ENCODE measurements at regions of chr20 and their contacts with region 1.

Region 1: DNA sequence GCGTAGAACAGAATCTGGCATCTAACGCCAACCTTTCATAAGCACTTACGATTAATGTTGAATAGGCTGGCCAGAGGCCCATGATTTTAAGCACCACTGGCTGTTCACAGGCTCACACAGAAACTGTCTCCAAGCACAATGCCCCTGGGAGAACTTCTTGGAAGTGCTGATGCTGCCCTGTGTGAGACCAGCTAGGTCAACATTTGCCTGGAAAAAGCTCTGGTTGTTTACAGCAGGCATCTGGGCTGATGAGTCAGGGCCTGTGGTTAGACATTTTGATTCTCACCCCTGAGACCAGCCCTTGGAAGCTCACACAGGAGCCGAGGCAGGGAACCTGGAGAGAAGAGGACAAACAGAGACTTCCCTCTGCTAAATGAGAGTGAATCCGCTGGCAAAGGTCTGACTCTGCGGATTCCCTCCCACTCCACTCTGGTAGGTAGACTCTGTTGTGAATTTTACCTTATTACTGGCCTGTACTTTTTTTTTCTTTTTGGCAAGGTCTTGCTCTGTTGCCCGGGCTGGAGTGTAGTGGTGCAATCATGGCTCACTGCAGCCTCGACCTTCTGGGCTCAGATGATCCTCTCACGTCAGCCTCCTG is 6.8 kb upstream of the SULF2 start:
- DNase-seq: peak; percentile 91
- H3K4me3 ChIP-seq: no peak overlapping the region
- H3K27ac ChIP-seq: peak overlapping the region; percentile 58 to 82 (median 71)
- H3K4me1 ChIP-seq: peaks cover 0 to 54% (median 37%) of the 10 kb centered on the region in 4 donors
- H3K27me3 ChIP-seq: no peaks in the 10 kb centered on the region
- CTCF ChIP-seq: no peak
- EP300 ChIP-seq: peak in 1 of 4 donors; percentile 33
- POLR2A ChIP-seq: no peak

Region 2: GRCh38 chr20:47725248-47725973 is 66.7 kb before region 1 on chr20:
- intact Hi-C with region 1: no loop called
- DNase-seq: peak; percentile 80
- H3K4me3 ChIP-seq: no peak overlapping the region
- H3K27ac ChIP-seq: no peak overlapping the region
- H3K4me1 ChIP-seq: peaks cover 0 to 18% (median 14%) of the 10 kb centered on the region in 4 donors
- H3K27me3 ChIP-seq: no peaks in the 10 kb centered on the region
- CTCF ChIP-seq: peak; percentile 31 to 86 (median 81)
- EP300 ChIP-seq: no peak
- POLR2A ChIP-seq: no peak

Region 3: DNA sequence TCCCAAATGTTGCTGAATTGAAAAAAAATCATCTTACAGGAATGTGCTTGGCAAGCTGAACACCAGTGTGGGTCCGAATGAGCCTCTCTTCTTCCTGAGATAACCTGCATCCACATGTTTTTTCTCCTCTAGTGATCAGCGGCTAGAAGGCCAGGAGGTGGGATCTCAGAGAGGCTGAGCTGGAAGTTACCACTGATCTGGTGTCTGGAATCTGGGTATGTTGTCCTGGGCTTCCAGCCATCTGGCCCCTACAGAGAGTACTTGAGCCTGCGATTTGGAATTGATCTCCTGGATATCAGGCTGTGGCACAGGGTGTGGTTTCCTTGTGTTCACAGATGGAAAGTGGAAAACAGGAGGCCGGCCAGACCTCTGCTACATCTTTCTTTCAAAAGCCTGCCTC is 42.8 kb before region 1 on chr20:
- intact Hi-C with region 1: no loop called
- DNase-seq: no peak
- H3K4me3 ChIP-seq: no peak overlapping the region
- H3K27ac ChIP-seq: peak overlapping the region in 2 of 4 donors; percentile 9 to 32
- H3K4me1 ChIP-seq: peaks cover 0 to 20% (median 10%) of the 10 kb centered on the region in 4 donors
- H3K27me3 ChIP-seq: no peaks in the 10 kb centered on the region
- CTCF ChIP-seq: no peak
- EP300 ChIP-seq: no peak
- POLR2A ChIP-seq: no peak

Region 4: DNA sequence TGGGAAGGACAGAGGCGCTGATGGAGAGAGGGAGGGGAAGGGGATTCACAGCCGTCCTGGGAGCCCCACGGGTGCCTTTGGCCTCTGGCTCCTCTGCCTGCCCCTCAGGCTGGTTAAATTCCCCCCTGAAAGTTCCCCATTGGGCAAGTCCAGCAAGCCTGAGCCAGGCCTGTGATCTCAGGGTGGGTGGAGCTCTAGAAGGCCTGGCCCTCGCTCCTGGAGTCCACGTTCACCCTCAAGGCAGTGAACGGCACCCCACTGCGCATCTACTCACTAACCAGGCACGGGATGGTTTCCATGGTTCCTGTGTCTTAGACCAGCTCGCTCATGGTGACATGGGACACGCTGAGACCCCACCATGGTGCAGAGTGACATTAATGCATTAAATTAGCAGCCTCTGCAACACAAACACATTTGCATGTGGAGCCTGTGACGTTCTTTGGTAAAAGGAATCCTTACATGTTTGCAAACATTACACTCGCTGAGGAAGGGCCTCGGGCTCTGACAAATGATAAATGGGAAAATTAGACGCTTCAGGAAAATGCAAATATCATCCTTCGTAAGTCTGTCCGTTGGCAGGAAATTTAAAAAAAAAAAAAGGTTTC is 583.0 kb after region 1 on chr20:
- intact Hi-C with region 1: loop called (anchors 5 kb)
- DNase-seq: no peak
- H3K4me3 ChIP-seq: no peak overlapping the region
- H3K27ac ChIP-seq: peak overlapping the region in 1 of 4 donors; percentile 27
- H3K4me1 ChIP-seq: peaks cover 0 to 9% (median 6%) of the 10 kb centered on the region in 4 donors
- H3K27me3 ChIP-seq: no peaks in the 10 kb centered on the region
- CTCF ChIP-seq: no peak
- EP300 ChIP-seq: no peak
- POLR2A ChIP-seq: no peak

Measured in sigmoid colon (tissue), 7 donors.